Activated T-helper 2 cell treated with anti-CD3 and anti-CD28 coated beads, Interferon-gamma antibody, Interleukin-2, Interleukin-4, amounts not matched to agents 10 μg/mL and 5 μg/mL and 100 μg/mL, durations not matched to agents 14 hours and 24 hours and 36 hours (primary cell): ENCODE measurements at regions of chr7 and their contacts with region 1.

Region 1: GRCh38 chr7:23357190-23358093 is 58.3 kb downstream of the MALSU1 start:
- DNase-seq: no peak
- H3K4me3 Mint-ChIP-seq: peak overlapping the region; percentile 22
- H3K27ac Mint-ChIP-seq: peak overlapping the region; percentile 83
- H3K4me1 Mint-ChIP-seq: peaks cover 62% of the 10 kb centered on the region
- H3K27me3 Mint-ChIP-seq: no peaks in the 10 kb centered on the region

Region 2: GRCh38 chr7:22896917-22897316 is 460.5 kb before region 1 on chr7:
- intact Hi-C with region 1: no loop called
- DNase-seq: no peak
- H3K4me3 Mint-ChIP-seq: no peak overlapping the region
- H3K27ac Mint-ChIP-seq: no peak overlapping the region
- H3K4me1 Mint-ChIP-seq: peaks cover 12% of the 10 kb centered on the region
- H3K27me3 Mint-ChIP-seq: peaks cover 4% of the 10 kb centered on the region

Region 3: DNA sequence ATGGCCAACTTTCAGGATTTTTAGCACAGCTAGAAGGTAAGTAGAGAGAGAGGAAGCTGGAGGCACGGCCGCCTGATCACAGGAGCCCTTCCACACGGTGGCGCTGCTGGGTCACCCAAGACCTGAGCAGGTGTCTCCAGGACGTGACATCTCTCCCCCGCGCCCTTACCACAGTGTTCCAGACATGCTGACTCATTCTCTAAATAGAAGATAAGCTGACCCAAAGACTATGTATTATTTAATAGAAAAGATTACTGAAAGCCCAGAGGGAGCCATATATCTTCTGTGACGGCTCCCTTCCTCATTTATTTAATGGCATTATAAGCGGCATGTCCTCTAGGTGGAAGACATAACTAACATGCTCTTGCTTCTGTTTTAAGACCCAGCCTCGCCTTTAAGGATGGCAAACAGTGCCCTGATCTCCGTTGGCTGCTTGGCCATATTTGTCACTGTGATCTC is 84.3 kb before region 1 on chr7:
- intact Hi-C with region 1: loop called (anchors 2 kb)
- DNase-seq: peak; percentile 84
- H3K4me3 Mint-ChIP-seq: peak overlapping the region; percentile 55
- H3K27ac Mint-ChIP-seq: peak overlapping the region; percentile 21
- H3K4me1 Mint-ChIP-seq: peaks cover 20% of the 10 kb centered on the region
- H3K27me3 Mint-ChIP-seq: peaks cover 3% of the 10 kb centered on the region

Region 4: DNA sequence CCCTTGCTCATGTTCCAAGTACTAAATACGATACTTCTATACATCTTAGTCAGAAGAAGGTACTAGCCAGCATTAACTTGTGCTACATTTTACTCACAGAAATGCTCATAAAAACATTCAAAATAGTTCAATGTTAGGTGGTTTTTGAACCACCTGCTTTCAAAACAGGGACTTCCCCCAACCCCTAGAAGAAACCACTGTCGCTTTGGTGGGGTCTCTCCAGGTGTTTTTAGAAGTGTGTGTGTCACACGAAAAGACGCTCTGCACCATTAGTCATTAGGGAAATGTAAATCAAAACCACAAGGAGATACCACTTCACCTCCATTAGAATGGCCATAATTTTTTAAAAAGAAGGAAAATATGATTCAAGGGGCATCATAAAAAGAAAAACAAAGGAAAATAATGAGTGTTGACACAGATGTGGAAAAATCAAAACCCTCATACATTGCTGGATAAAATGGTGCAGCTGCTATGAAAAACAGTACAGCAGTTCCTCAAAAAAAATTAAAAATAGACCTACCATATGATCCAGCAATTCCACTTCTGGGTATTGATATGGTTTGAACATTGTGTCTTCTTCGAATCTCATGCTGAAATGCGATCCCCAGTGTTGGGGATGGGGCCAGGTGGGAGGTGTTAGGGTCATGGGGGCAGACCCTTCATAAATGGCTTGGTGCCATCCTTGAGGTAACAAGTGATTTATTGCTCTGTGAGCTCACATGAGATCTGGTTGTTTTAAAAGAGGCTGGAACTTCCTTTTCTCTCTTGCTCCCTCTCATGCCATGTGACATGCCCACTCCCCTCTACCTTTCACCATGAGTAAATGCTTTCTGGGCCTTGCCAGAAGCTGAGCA is 15.9 kb after region 1 on chr7:
- intact Hi-C with region 1: loop called (anchors 1 kb)
- DNase-seq: peak; percentile 28
- H3K4me3 Mint-ChIP-seq: no peak overlapping the region
- H3K27ac Mint-ChIP-seq: peak overlapping the region; percentile 83
- H3K4me1 Mint-ChIP-seq: peaks cover 57% of the 10 kb centered on the region
- H3K27me3 Mint-ChIP-seq: no peaks in the 10 kb centered on the region

Region 5: GRCh38 chr7:23404546-23405239 is 47.3 kb after region 1 on chr7:
- intact Hi-C with region 1: loop called (anchors 1 kb)
- DNase-seq: no peak
- H3K4me3 Mint-ChIP-seq: peak overlapping the region; percentile 14
- H3K27ac Mint-ChIP-seq: peak overlapping the region; percentile 91
- H3K4me1 Mint-ChIP-seq: peaks cover 22% of the 10 kb centered on the region
- H3K27me3 Mint-ChIP-seq: no peaks in the 10 kb centered on the region

Region 6: GRCh38 chr7:23462846-23463245 is 105.4 kb after region 1 on chr7:
- intact Hi-C with region 1: loop called (anchors 2 kb)
- DNase-seq: no peak
- H3K4me3 Mint-ChIP-seq: no peak overlapping the region
- H3K27ac Mint-ChIP-seq: no peak overlapping the region
- H3K4me1 Mint-ChIP-seq: peaks cover 49% of the 10 kb centered on the region
- H3K27me3 Mint-ChIP-seq: peaks cover 24% of the 10 kb centered on the region